Caco-2 (cell line): ENCODE measurements at regions of chr12 and their contacts with region 1.

Region 1: GRCh38 chr12:106108185-106108835 is 30.4 kb downstream of the NUAK1 start:
- DNase-seq: no peak
- H3K4me3 ChIP-seq: no peak overlapping the region
- H3K4me3 Mint-ChIP-seq: no peak overlapping the region
- H3K27ac Mint-ChIP-seq: peak overlapping the region; percentile 51
- H3K4me1 ChIP-seq: peaks cover 49% of the 10 kb centered on the region
- H3K4me1 Mint-ChIP-seq: peaks cover 33% of the 10 kb centered on the region
- H3K27me3 ChIP-seq: no peaks in the 10 kb centered on the region
- H3K27me3 Mint-ChIP-seq: no peaks in the 10 kb centered on the region
- CTCF ChIP-seq: no peak

Region 2: DNA sequence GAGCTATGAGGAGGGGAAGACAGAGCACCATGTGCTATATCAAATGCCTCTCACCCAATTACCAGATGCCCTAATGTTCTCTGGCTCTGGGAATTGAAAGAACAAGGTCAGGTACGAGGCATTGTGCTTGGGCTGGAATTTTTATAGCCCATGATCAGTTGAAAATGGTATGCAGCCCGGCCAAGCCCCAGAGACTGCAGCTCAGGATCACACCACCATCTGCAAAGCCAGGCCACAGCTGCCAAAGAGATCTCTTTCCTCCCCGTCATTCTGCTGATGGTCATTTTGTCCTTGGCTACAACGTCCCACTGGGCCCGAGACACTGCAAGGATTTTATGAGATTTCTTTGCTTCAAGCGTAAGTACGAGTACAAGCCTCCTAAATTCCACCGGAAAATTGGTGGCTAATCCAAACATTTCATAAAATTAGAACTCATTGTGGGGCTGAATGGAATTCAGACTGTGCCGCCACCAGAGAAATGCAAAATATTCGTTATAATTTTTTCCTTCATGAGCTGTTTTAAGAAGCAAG is 15.3 kb after region 1 on chr12:
- CTCF ChIA-PET with region 1: interaction called, 4 read pairs
- POLR2A ChIA-PET with region 1: no interaction called
- intact Hi-C with region 1: loop called (anchors 1 kb)
- DNase-seq: peak; percentile 43 to 62
- H3K4me3 ChIP-seq: no peak overlapping the region
- H3K4me3 Mint-ChIP-seq: no peak overlapping the region
- H3K27ac Mint-ChIP-seq: peak overlapping the region; percentile 85
- H3K4me1 ChIP-seq: peaks cover 71% of the 10 kb centered on the region
- H3K4me1 Mint-ChIP-seq: peaks cover 51% of the 10 kb centered on the region
- H3K27me3 ChIP-seq: no peaks in the 10 kb centered on the region
- H3K27me3 Mint-ChIP-seq: no peaks in the 10 kb centered on the region
- CTCF ChIP-seq: no peak

Region 3: DNA sequence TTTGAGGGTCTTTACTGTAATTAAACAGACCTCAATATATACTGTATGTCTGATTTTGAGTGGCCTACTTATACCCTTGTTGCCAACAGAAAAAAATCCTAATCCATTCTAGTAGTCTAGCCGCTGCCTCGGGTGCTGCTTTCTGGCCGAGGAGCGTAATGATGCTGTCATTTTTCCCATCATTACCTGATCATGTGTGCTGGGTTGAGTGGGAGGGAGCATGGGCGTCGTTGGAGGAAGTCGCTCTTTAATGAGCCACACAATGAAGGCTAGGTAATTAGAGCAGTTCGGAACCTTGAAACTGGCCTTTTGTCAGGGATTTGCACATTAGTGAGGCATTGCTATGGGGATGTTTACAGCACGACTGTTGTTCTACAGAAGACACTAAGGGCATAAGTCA is 398.4 kb after region 1 on chr12:
- CTCF ChIA-PET with region 1: no interaction called
- POLR2A ChIA-PET with region 1: no interaction called
- intact Hi-C with region 1: no loop called
- DNase-seq: no peak
- H3K4me3 ChIP-seq: no peak overlapping the region
- H3K4me3 Mint-ChIP-seq: no peak overlapping the region
- H3K27ac Mint-ChIP-seq: no peak overlapping the region
- H3K4me1 ChIP-seq: no peaks in the 10 kb centered on the region
- H3K4me1 Mint-ChIP-seq: no peaks in the 10 kb centered on the region
- H3K27me3 ChIP-seq: no peaks in the 10 kb centered on the region
- H3K27me3 Mint-ChIP-seq: no peaks in the 10 kb centered on the region
- CTCF ChIP-seq: no peak